ENCODE measurements at regions of chrX and their contacts with region 1.

Region 1: DNA sequence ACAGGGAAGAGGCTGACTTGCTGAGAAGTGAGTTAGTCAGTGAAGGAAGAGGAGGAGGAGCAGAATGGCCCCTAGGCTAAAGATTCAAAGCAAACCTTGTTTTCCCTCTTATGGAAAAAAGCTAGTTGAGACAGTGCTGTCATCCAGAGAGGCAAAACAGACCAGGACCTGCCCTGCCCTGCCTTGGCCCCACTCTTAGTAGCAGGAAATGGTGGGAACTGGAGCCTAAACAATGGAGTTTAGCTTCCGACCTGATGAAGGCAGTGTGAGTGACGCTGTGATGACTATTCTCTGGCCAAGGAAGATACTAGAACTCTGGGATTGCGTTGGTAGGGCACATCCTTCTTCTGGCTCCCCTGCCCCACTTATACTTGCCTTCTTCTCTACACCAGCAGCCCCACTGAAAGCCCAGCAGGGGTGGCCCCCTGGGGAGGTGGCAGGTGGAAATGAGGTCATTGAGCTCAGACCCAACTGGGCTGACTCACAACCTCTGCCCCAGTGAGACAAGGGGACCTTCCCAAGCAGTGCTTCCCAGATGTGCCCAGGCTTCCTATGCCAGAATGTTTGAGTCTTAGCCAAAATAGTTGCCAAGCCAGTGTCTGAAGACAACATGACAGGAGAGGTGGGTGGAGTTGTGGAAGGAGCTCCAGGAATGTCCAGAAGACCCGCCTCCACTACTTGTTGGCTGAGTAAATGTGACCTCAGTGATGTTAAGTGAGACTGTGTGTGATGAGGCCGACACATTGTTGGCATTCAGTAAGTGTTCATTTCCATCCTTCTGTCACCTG is 38.8 kb downstream of the MSN start:
- DNase-seq: no peak
- ATAC-seq: peak; percentile 91

Region 2: DNA sequence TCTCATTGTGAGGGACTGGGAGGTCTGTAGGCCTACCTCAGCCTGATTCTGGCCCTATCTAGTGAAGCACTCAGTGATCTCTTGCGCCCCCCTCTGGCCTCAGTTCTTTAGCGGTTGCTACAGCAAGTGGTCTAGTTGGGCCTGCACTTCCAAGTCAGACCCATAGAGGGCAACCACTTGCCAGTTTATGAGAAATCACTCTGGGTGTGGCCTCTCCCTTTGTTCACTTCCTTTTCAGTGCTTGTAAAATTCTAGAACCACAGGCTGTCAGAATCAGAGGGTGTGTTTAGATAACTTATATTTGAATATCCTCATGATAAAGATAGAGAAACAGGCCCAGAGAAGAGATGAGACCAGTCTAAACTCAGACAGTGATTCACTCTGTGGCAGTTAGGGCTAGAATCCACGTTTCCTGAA is 110.8 kb before region 1 on chrX:
- intact Hi-C with region 1: loop called (anchors 5 kb)
- DNase-seq: peak; percentile 93
- ATAC-seq: peak; percentile 94

Region 3: DNA sequence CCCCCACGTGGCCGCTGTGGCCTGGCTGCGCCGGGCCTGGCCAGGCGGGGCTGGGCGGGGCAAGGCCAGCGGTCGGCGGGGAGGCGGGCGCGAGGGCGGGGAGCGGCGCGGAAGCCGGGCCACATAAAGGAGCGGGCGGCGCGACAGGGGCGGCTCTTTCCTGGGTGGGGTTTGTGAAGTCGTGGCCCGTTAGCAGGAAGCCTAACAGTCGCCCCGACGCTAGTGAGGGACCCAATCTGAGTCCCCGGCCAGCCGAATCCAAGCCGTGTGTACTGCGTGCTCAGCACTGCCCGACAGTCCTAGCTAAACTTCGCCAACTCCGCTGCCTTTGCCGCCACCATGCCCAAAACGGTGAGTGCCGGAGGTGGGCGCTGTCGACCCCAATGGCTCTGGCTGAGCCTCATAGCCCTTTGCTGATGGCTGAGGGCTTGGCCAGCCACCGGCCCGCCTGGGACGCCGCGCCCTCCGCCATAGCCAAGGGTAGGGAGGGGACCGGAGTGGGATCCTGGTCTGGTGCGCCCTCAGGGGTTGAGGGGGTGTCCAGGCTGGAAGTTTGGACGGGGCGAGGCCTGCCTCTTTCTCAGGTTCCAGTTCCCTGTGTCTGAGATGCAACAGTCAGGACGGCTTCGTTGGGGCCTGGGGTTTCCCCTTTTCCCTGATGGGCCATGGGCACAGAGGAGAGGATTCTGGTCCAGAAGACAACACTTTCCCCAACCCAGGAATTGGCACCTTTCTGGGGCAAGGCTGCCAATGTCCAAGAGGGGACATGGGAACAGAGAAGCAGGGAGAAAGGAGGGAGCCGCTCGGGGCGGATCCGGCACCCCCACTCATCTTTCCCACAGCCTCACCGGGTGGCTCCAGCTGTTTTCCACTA is 38.5 kb before region 1 on chrX and contains the start of gene MSN:
- intact Hi-C with region 1: loop called (anchors 5 kb)
- DNase-seq: peak; percentile 91
- ATAC-seq: peak; percentile 93
- total RNA-seq, gene MSN: 131 TPM

Region 4: DNA sequence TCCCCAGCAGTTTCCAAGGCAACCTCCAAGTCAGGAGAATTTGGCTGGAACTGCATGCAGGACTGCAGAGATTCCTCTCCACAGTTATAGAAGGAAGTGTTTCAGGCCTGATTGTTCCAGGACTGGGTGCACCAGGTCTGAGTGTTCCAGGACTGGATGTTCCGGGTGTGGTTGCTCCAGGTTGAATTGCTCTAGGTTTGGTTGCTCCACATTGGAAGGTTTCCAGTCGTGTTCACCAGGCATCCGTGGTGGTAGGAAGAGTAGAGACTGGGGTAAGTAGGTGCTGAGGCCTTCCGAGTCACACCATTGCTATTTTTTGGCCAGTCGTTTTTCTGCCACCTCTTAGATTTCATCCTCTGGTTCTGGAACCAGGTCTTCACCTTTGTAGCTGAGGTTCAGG is 66.6 kb after region 1 on chrX:
- intact Hi-C with region 1: no loop called
- DNase-seq: no peak
- ATAC-seq: no peak

Measured in Right ventricle myocardium inferior (tissue), 1 donor.